ENCODE measurements at regions of chr19 and their contacts with region 1.

Region 1: GRCh38 chr19:44304659-44305193 is at the start of gene ZNF235:
- DNase-seq: peak; percentile 17 to 77 (median 59)
- ATAC-seq: peak; percentile 97
- H3K4me3 ChIP-seq: peak within 1 kb of the TSS; percentile 84
- H3K4me3 Mint-ChIP-seq: peak within 1 kb of the TSS; percentile 88 to 96 (median 93)
- H3K27ac ChIP-seq: peak within 1 kb of the TSS; percentile 65
- H3K27ac Mint-ChIP-seq: peak within 1 kb of the TSS; percentile 20 to 82 (median 77)
- H3K4me1 ChIP-seq: peaks cover 10 to 12% of the 10 kb centered on the region in 2 donors
- H3K4me1 Mint-ChIP-seq: peaks cover 5 to 34% (median 27%) of the 10 kb centered on the region in 7 donors
- H3K27me3 ChIP-seq: no peaks in the 10 kb centered on the region
- H3K27me3 Mint-ChIP-seq: peaks cover 0 to 10% (median 0%) of the 10 kb centered on the region in 5 donors
- total RNA-seq, gene ZNF235: 5.5 to 14.3 (median 6.7) TPM

Region 2: GRCh38 chr19:43983912-43984686 is 320.6 kb before region 1 on chr19 and contains the start of gene ZNF155:
- CTCF ChIA-PET with region 1: no interaction called
- POLR2A ChIA-PET with region 1: no interaction called
- intact Hi-C with region 1: loop called in 1 of 2 experiments (anchors 10 kb)
- DNase-seq: peak; percentile 46 to 72 (median 64)
- ATAC-seq: peak; percentile 92
- H3K4me3 ChIP-seq: peak within 1 kb of the TSS; percentile 96
- H3K4me3 Mint-ChIP-seq: peak within 1 kb of the TSS; percentile 89 to 99 (median 96)
- H3K27ac ChIP-seq: peak within 1 kb of the TSS; percentile 79
- H3K27ac Mint-ChIP-seq: peak within 1 kb of the TSS; percentile 72 to 97 (median 93)
- H3K4me1 ChIP-seq: peaks cover 0 to 3% of the 10 kb centered on the region in 2 donors
- H3K4me1 Mint-ChIP-seq: peaks cover 0 to 28% (median 14%) of the 10 kb centered on the region in 7 donors
- H3K27me3 ChIP-seq: no peaks in the 10 kb centered on the region
- H3K27me3 Mint-ChIP-seq: no peaks in the 10 kb centered on the region
- total RNA-seq, gene ZNF155: 5.2 to 13.3 (median 9.1) TPM

Region 3: GRCh38 chr19:44164673-44165512 is 139.8 kb before region 1 on chr19 and contains the start of gene ZNF226:
- CTCF ChIA-PET with region 1: no interaction called
- POLR2A ChIA-PET with region 1: interaction called, 7 read pairs
- intact Hi-C with region 1: loop called (anchors 1 to 10 kb)
- DNase-seq: peak; percentile 24 to 83 (median 75)
- ATAC-seq: peak; percentile 97
- H3K4me3 ChIP-seq: peak within 1 kb of the TSS; percentile 87
- H3K4me3 Mint-ChIP-seq: peak within 1 kb of the TSS; percentile 97 to 99 (median 98)
- H3K27ac ChIP-seq: peak within 1 kb of the TSS; percentile 78
- H3K27ac Mint-ChIP-seq: peak within 1 kb of the TSS; percentile 84 to 99 (median 97)
- H3K4me1 ChIP-seq: peaks cover 6 to 9% of the 10 kb centered on the region in 2 donors
- H3K4me1 Mint-ChIP-seq: peaks cover 10 to 40% (median 40%) of the 10 kb centered on the region in 7 donors
- H3K27me3 ChIP-seq: no peaks in the 10 kb centered on the region
- H3K27me3 Mint-ChIP-seq: no peaks in the 10 kb centered on the region
- total RNA-seq, gene ZNF226: 14.0 to 59.9 (median 20.3) TPM

Region 4: GRCh38 chr19:44212250-44212865 is 92.4 kb before region 1 on chr19 and contains the start of gene ZNF227:
- CTCF ChIA-PET with region 1: no interaction called
- POLR2A ChIA-PET with region 1: interaction called, 4 read pairs
- intact Hi-C with region 1: loop called (anchors 1 kb)
- DNase-seq: peak; percentile 47 to 80 (median 75)
- ATAC-seq: peak; percentile 98
- H3K4me3 ChIP-seq: peak within 1 kb of the TSS; percentile 98
- H3K4me3 Mint-ChIP-seq: peak within 1 kb of the TSS; percentile 85 to 100 (median 96)
- H3K27ac ChIP-seq: peak within 1 kb of the TSS; percentile 81
- H3K27ac Mint-ChIP-seq: peak within 1 kb of the TSS; percentile 82 to 97 (median 92)
- H3K4me1 ChIP-seq: peaks cover 0 to 15% of the 10 kb centered on the region in 2 donors
- H3K4me1 Mint-ChIP-seq: peaks cover 19 to 45% (median 31%) of the 10 kb centered on the region in 7 donors
- H3K27me3 ChIP-seq: no peaks in the 10 kb centered on the region
- H3K27me3 Mint-ChIP-seq: peaks cover 0 to 4% (median 0%) of the 10 kb centered on the region in 5 donors
- total RNA-seq, gene ZNF227: 18.3 to 51.5 (median 30.0) TPM

Region 5: GRCh38 chr19:44315883-44316282 is 11.2 kb after region 1 on chr19:
- CTCF ChIA-PET with region 1: no interaction called
- POLR2A ChIA-PET with region 1: no interaction called
- intact Hi-C with region 1: no loop called
- DNase-seq: no peak
- ATAC-seq: no peak
- H3K4me3 ChIP-seq: no peak overlapping the region
- H3K4me3 Mint-ChIP-seq: no peak overlapping the region
- H3K27ac ChIP-seq: no peak overlapping the region
- H3K27ac Mint-ChIP-seq: no peak overlapping the region
- H3K4me1 ChIP-seq: no peaks in the 10 kb centered on the region
- H3K4me1 Mint-ChIP-seq: no peaks in the 10 kb centered on the region
- H3K27me3 ChIP-seq: no peaks in the 10 kb centered on the region
- H3K27me3 Mint-ChIP-seq: peaks cover 0 to 38% (median 19%) of the 10 kb centered on the region in 5 donors